GM13977 (cell line): ENCODE measurements at regions of chr7 and their contacts with region 1.

Region 1: GRCh38 chr7:12625836-12626235 is 55.3 kb downstream of the SCIN start:
- DNase-seq: no peak
- CTCF ChIP-seq: no peak

Region 2: DNA sequence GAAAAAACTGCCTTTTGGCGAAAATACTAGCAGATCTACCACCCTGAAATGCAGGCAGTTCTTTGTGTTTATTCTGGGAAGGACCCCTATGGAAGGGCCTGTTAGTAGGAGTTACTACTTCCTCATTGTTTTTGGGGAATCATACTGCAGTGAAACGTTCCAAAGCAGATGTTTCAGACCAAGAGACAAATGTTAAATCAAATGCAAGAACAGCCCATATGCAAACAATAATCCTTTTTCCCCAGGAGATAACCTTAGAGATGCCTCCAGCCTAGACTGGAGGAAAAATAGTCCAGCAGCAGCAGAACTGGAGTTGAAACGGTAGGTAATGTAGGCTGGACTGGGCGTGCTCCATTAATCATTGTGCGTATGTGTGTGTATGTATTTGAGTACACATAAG is 156.3 kb before region 1 on chr7:
- in situ Hi-C with region 1: no loop called
- DNase-seq: no peak
- CTCF ChIP-seq: no peak

Region 3: DNA sequence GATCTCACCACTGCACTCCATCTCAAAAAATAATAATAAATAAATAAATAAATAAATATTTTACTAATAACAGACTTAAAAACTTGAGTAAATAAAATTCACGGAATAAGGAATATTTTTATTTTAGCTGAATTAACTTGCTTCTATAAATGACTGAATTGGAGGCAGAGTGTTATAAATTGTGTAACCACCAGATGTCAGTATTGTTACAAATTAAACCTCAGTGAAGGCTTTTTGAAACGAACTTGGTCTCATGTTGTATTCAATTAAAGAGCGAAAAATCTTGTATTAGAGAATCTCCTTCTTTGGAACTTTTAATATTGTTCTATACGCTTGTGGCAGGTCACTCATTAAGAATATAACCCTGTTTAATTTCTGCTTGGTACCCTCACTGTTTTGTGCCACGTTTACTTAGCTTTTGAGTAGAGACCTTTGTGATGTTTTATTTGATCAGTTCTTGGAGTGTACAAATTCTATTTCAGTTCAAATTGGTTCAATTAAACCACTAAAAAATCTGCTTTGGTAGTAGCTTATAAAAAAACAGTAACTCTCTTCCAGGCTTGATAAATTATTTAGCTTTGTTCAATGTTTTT is 100.9 kb before region 1 on chr7:
- in situ Hi-C with region 1: loop called (anchors 5 kb)
- DNase-seq: peak; percentile 20
- CTCF ChIP-seq: peak; percentile 54